Esophagus muscularis mucosa (tissue), 4 donors: ENCODE measurements at regions of chr3 and their contacts with region 1.

Region 1: DNA sequence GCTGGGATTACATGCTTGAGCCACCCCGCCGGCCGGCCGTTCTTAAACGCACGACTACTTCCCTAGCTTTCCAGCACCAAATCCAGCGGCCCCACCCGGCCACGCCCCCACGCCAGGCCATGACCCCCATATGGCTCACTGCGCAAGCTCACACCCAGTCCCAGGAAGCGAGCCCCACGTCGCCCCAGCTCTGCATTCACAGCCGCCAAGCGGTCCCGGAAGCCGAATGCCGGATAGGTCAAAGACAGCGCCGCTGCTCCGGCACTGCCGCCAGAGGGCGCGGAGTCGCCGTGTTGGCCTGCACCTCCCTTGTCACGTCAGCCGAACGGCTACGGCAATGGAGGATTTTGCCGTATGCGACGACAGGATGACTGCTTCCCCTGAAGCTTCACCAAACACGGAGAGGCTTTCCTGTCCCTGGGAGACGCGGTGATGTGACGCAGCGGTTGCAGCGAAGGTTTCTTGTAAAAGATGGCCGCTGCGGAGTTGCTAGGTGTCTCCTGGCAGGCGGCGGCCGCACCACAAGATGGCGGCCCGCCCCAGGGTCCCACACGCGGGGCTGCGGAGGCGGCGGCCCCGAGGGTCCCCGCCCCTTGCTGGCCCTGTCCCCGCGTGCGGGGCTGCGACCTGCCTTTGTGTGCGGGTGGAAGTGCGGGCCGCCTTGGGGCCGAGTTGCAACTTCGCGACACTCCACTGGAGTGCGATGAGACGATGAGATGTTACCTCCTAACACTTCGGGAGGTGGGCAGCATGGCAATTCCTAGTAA is 30.2 kb upstream of the RPN1 start:
- DNase-seq: peak; percentile 100
- H3K4me3 ChIP-seq: peak overlapping the region; percentile 72 to 86 (median 74)
- H3K27ac ChIP-seq: peak overlapping the region; percentile 94 to 97 (median 96)
- H3K4me1 ChIP-seq: peaks cover 10 to 18% (median 16%) of the 10 kb centered on the region in 4 donors
- H3K27me3 ChIP-seq: no peaks in the 10 kb centered on the region
- CTCF ChIP-seq: peak; percentile 92 to 97 (median 97)
- EP300 ChIP-seq: no peak
- POLR2A ChIP-seq: peak; percentile 67

Region 2: GRCh38 chr3:128650096-128651050 is 30.4 kb before region 1 on chr3 and contains the start of gene RPN1:
- intact Hi-C with region 1: loop called (anchors 1 kb)
- DNase-seq: peak; percentile 98
- H3K4me3 ChIP-seq: peak within 1 kb of the TSS; percentile 82 to 100 (median 96)
- H3K27ac ChIP-seq: peak within 1 kb of the TSS; percentile 98 to 100 (median 98)
- H3K4me1 ChIP-seq: peaks cover 12 to 43% (median 33%) of the 10 kb centered on the region in 4 donors
- H3K27me3 ChIP-seq: no peaks in the 10 kb centered on the region
- CTCF ChIP-seq: no peak
- EP300 ChIP-seq: no peak
- POLR2A ChIP-seq: peak; percentile 60
- total RNA-seq, gene RPN1: 131 to 198 (median 177) TPM

Region 3: GRCh38 chr3:128725932-128726690 is 45.3 kb after region 1 on chr3 and contains the start of gene RAB7A:
- intact Hi-C with region 1: loop called (anchors 2 kb)
- DNase-seq: peak; percentile 99
- H3K4me3 ChIP-seq: peak within 1 kb of the TSS; percentile 88 to 100 (median 97)
- H3K27ac ChIP-seq: peak within 1 kb of the TSS; percentile 98 to 99 (median 99)
- H3K4me1 ChIP-seq: peaks cover 34 to 49% (median 46%) of the 10 kb centered on the region in 4 donors
- H3K27me3 ChIP-seq: no peaks in the 10 kb centered on the region
- CTCF ChIP-seq: peak in 1 of 3 experiments; percentile 34
- EP300 ChIP-seq: peak; percentile 33
- POLR2A ChIP-seq: peak; percentile 97
- total RNA-seq, gene RAB7A: 81.0 to 116 (median 87.0) TPM

Region 4: GRCh38 chr3:128794770-128795649 is 114.2 kb after region 1 on chr3:
- intact Hi-C with region 1: loop called (anchors 2 kb)
- DNase-seq: peak; percentile 93
- H3K4me3 ChIP-seq: no peak overlapping the region
- H3K27ac ChIP-seq: peak overlapping the region; percentile 21 to 54 (median 54)
- H3K4me1 ChIP-seq: peaks cover 33 to 54% (median 43%) of the 10 kb centered on the region in 4 donors
- H3K27me3 ChIP-seq: no peaks in the 10 kb centered on the region
- CTCF ChIP-seq: peak; percentile 80 to 85 (median 81)
- EP300 ChIP-seq: no peak
- POLR2A ChIP-seq: no peak